Mammary epithelial cell (primary cell): ENCODE measurements at regions of chr6 and their contacts with region 1.

Region 1: DNA sequence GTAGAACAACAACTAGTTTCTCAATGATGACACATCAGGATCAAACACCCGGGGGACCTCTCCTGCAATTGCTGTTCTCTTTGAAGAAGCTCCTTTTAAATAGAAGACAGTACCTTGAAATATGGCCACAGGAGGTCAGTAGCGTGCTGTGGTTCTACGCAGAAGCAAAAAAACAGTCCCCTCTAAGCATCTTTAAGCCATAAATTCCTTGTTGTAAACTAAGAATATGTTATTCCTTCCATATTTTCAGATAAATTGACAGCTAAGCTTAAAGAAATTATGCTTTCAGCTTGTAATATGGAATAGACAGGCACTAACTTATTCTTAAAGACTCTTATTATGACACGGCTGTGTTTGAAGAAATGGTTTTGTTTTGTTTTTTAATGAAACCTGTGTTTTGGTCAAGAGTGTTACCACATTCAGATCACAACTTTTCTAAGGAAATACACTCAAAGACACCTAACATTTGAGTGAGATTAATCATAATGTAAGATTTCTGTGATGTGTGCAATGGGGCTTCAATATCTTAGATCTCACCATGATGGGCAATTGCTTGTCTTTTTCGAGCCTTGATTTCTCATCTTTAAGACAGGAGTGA is 49.7 kb upstream of the IL20RA start:
- DNase-seq: peak; percentile 43
- H3K4me3 ChIP-seq: no peak overlapping the region
- H3K27ac ChIP-seq: no peak overlapping the region
- H3K4me1 ChIP-seq: no peaks in the 10 kb centered on the region
- H3K27me3 ChIP-seq: no peaks in the 10 kb centered on the region
- CTCF ChIP-seq: peak; percentile 77 to 80

Region 2: DNA sequence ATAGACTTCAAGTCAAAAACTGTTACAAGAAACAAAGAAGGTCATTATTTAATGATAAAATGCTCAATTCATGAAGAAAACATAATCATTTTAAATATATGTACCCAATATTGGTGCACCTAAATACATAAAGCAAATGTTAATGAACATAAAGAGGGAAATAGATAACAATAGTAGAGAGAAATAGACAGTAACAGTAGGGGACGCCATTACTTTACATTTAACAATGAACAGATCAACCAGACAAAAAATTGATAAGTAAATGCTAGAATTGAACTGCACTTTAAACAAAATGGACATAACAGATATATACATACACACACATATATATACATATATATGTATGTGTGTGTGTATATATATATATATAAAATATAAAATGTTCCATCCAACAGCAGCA is 41.6 kb after region 1 on chr6:
- CTCF ChIA-PET with region 1: interaction called, 3 read pairs
- dilution Hi-C with region 1: no loop called
- in situ Hi-C with region 1: no loop called
- intact Hi-C with region 1: loop called (anchors 1 kb)
- DNase-seq: no peak
- H3K4me3 ChIP-seq: no peak overlapping the region
- H3K27ac ChIP-seq: no peak overlapping the region
- H3K4me1 ChIP-seq: no peaks in the 10 kb centered on the region
- H3K27me3 ChIP-seq: peaks cover 2% of the 10 kb centered on the region
- CTCF ChIP-seq: peak; percentile 63 to 71

Region 3: DNA sequence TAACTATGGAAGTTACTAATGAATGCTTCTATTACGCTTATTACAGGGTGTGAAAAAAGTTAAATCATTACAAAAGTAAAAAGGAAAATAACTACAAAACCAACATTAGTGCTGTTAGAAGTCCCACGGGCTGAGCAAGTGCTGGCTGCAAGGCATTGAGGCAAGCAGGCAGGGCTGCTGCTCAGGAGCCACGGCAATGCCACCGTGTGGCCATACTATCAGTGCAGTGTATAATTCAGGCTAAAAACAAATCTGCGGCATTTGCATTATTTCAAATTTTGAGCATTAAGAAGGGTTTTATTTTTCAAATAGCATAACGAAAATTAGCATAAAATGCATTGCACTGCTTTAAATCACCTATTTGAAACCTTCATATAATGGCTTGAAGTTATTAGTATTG is 107.6 kb after region 1 on chr6:
- CTCF ChIA-PET with region 1: no interaction called
- dilution Hi-C with region 1: no loop called
- in situ Hi-C with region 1: no loop called
- intact Hi-C with region 1: loop called (anchors 1 kb)
- DNase-seq: no peak
- H3K4me3 ChIP-seq: no peak overlapping the region
- H3K27ac ChIP-seq: no peak overlapping the region
- H3K4me1 ChIP-seq: no peaks in the 10 kb centered on the region
- H3K27me3 ChIP-seq: no peaks in the 10 kb centered on the region
- CTCF ChIP-seq: peak; percentile 67 to 81

Region 4: GRCh38 chr6:137271245-137272183 is 177.0 kb after region 1 on chr6:
- CTCF ChIA-PET with region 1: no interaction called
- dilution Hi-C with region 1: no loop called
- in situ Hi-C with region 1: no loop called
- intact Hi-C with region 1: loop called (anchors 1 kb)
- DNase-seq: peak; percentile 41
- H3K4me3 ChIP-seq: no peak overlapping the region
- H3K27ac ChIP-seq: no peak overlapping the region
- H3K4me1 ChIP-seq: no peaks in the 10 kb centered on the region
- H3K27me3 ChIP-seq: no peaks in the 10 kb centered on the region
- CTCF ChIP-seq: peak; percentile 92 to 98

Region 5: GRCh38 chr6:137323860-137324259 is 229.3 kb after region 1 on chr6:
- CTCF ChIA-PET with region 1: interaction called, 10 read pairs
- dilution Hi-C with region 1: no loop called
- in situ Hi-C with region 1: loop called in 1 of 2 experiments (anchors 25 kb)
- intact Hi-C with region 1: no loop called
- DNase-seq: no peak
- H3K4me3 ChIP-seq: no peak overlapping the region
- H3K27ac ChIP-seq: no peak overlapping the region
- H3K4me1 ChIP-seq: no peaks in the 10 kb centered on the region
- H3K27me3 ChIP-seq: no peaks in the 10 kb centered on the region
- CTCF ChIP-seq: no peak

Region 6: GRCh38 chr6:137641474-137642077 is 547.1 kb after region 1 on chr6:
- CTCF ChIA-PET with region 1: interaction called, 6 read pairs
- dilution Hi-C with region 1: no loop called
- in situ Hi-C with region 1: loop called in 1 of 2 experiments (anchors 5 kb)
- intact Hi-C with region 1: loop called (anchors 1 kb)
- DNase-seq: peak; percentile 57
- H3K4me3 ChIP-seq: no peak overlapping the region
- H3K27ac ChIP-seq: no peak overlapping the region
- H3K4me1 ChIP-seq: peaks cover 10% of the 10 kb centered on the region
- H3K27me3 ChIP-seq: no peaks in the 10 kb centered on the region
- CTCF ChIP-seq: peak; percentile 68 to 69